HCT116 (cell line): ENCODE measurements at regions of chr15 and their contacts with region 1.

Region 1: GRCh38 chr15:45268135-45268534 is 16.1 kb downstream of the SLC28A2 start:
- DNase-seq: no peak
- ATAC-seq: peak; percentile 50
- H3K4me3 ChIP-seq: no peak overlapping the region
- H3K27ac ChIP-seq: no peak overlapping the region
- H3K4me1 ChIP-seq: no peaks in the 10 kb centered on the region
- H3K27me3 ChIP-seq: no peaks in the 10 kb centered on the region
- CTCF ChIP-seq: peak; percentile 23 to 52 (median 43); a peak in 3 of 6 replicates
- POLR2A ChIP-seq: no peak
- RAD21 ChIP-seq: peak; percentile 42

Region 2: GRCh38 chr15:45205192-45205591 is 62.9 kb before region 1 on chr15:
- CTCF ChIA-PET with region 1: no interaction called
- POLR2A ChIA-PET with region 1: no interaction called
- RAD21 ChIA-PET with region 1: no interaction called
- intact Hi-C with region 1: loop called (anchors 2 kb)
- DNase-seq: peak; percentile 58
- ATAC-seq: peak; percentile 49
- H3K4me3 ChIP-seq: no peak overlapping the region
- H3K27ac ChIP-seq: no peak overlapping the region
- H3K4me1 ChIP-seq: peaks cover 0 to 14% of the 10 kb centered on the region in 2 experiments; a peak in 2 of 4 replicates
- H3K27me3 ChIP-seq: no peaks in the 10 kb centered on the region
- CTCF ChIP-seq: peak in 2 of 3 experiments; percentile 96 to 97; a peak in 4 of 6 replicates
- POLR2A ChIP-seq: no peak
- RAD21 ChIP-seq: no peak

Region 3: DNA sequence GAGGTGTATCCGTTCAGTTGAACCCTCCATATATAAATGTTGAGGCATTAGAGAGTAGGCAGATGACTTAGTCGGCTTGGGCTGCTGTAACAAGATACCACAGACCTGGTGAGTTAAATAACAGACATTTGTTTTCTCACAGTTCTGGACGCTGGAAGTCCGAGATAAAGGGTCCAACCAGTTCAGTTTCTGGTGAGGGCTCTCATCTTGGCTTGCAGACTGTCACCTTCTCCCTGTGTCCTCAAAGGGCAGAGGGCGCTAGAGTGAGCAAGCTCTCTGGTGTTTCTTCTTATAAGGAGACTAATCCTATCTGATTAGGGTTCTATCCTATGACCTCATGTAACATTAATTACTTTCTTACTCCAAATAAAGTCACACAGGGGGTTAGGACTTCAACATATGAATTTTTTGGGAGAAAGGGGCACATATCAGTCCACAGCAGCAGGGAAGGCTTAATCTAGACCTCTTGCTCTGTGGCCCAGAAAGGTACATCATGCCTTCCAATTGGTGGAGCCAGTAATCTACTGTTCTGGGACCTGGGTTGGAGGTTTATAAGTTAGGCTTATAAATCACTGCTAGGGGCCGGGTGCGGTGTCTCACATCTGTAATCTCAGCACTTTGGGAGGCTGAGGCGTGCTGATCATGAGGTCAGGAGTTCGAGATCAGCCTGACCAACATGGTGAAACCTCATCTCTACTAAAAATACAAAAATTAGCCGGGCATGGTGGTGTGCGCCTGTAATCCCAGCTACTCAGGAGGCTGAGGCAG is 42.4 kb before region 1 on chr15:
- CTCF ChIA-PET with region 1: no interaction called
- POLR2A ChIA-PET with region 1: no interaction called
- RAD21 ChIA-PET with region 1: no interaction called
- intact Hi-C with region 1: no loop called
- DNase-seq: no peak
- ATAC-seq: peak; percentile 42; the same call in 1 of the 2 replicates
- H3K4me3 ChIP-seq: no peak overlapping the region
- H3K27ac ChIP-seq: no peak overlapping the region
- H3K4me1 ChIP-seq: no peaks in the 10 kb centered on the region
- H3K27me3 ChIP-seq: no peaks in the 10 kb centered on the region
- CTCF ChIP-seq: peak in 1 of 3 experiments; percentile 12; a peak in 1 of 6 replicates
- POLR2A ChIP-seq: no peak
- RAD21 ChIP-seq: no peak

Region 4: DNA sequence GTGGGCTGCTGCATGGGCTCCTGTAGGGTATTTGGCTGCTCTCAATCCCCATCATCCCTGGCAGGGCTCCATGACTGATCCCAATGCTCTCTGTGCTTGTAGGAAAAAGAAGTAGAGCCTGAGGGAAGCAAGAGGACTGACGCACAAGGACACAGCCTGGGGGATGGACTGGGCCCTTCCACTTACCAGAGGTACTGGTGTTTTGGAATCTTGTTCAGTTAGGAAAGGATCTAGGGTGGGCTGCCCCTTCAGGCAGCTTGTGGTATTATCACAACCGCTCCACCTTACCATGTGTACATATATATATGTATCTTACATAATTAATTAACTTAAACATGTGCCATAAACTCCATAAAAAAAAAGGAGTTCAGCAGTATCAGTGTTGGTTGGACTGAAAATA is 14.8 kb before region 1 on chr15:
- CTCF ChIA-PET with region 1: no interaction called
- POLR2A ChIA-PET with region 1: no interaction called
- RAD21 ChIA-PET with region 1: no interaction called
- intact Hi-C with region 1: no loop called
- DNase-seq: no peak
- ATAC-seq: peak; percentile 87
- H3K4me3 ChIP-seq: no peak overlapping the region
- H3K27ac ChIP-seq: no peak overlapping the region
- H3K4me1 ChIP-seq: no peaks in the 10 kb centered on the region
- H3K27me3 ChIP-seq: no peaks in the 10 kb centered on the region
- CTCF ChIP-seq: peak in 2 of 3 experiments; percentile 44 to 52; a peak in 4 of 6 replicates
- POLR2A ChIP-seq: no peak
- RAD21 ChIP-seq: no peak